Mammary epithelial cell (primary cell): ENCODE measurements at regions of chr18 and their contacts with region 1.

Region 1: DNA sequence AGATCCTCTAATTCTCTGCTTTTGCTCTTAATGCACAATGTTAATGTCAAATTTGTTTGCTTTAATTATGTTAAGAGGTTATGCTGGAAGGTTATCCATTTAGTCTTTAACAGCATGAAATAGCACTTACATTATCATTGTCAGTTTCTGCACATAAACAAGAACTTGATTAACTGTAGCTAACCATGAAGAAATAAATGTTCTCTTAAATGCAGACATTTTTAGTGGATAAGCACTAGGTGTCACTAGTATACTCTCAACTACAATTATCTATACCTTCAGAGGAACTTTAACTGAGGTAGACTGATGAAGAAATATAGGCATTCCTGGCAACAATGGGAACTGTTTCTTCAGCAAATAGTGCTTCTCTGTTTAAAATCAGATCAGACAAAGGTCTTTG is 178.8 kb upstream of the CHST9 start:
- DNase-seq: no peak
- H3K4me3 ChIP-seq: no peak overlapping the region
- H3K27ac ChIP-seq: no peak overlapping the region
- H3K4me1 ChIP-seq: no peaks in the 10 kb centered on the region
- H3K27me3 ChIP-seq: peaks cover 2% of the 10 kb centered on the region
- CTCF ChIP-seq: peak; percentile 18 to 56

Region 2: DNA sequence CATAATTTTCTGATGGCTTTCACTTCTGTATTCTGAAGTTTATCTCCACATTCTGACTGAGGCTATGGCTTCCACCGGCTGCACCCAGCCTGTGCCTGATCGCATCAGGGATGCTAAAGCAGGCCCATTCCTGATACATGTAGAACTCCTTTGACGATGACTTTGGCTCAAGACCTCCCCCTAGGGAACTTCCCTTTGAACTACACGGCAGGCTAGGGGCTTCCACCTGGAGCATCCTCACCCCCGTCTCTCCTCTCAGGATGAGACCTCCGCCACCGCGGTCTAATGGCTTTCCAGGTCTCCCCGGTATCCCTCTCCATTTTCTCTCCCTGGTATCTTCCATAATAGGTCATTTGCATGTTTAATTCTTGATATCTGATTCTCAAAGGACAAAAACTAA is 36.1 kb after region 1 on chr18:
- CTCF ChIA-PET with region 1: no interaction called
- dilution Hi-C with region 1: no loop called
- in situ Hi-C with region 1: no loop called
- intact Hi-C with region 1: loop called (anchors 1 kb)
- DNase-seq: no peak
- H3K4me3 ChIP-seq: no peak overlapping the region
- H3K27ac ChIP-seq: no peak overlapping the region
- H3K4me1 ChIP-seq: no peaks in the 10 kb centered on the region
- H3K27me3 ChIP-seq: no peaks in the 10 kb centered on the region
- CTCF ChIP-seq: peak; percentile 24 to 37

Region 3: DNA sequence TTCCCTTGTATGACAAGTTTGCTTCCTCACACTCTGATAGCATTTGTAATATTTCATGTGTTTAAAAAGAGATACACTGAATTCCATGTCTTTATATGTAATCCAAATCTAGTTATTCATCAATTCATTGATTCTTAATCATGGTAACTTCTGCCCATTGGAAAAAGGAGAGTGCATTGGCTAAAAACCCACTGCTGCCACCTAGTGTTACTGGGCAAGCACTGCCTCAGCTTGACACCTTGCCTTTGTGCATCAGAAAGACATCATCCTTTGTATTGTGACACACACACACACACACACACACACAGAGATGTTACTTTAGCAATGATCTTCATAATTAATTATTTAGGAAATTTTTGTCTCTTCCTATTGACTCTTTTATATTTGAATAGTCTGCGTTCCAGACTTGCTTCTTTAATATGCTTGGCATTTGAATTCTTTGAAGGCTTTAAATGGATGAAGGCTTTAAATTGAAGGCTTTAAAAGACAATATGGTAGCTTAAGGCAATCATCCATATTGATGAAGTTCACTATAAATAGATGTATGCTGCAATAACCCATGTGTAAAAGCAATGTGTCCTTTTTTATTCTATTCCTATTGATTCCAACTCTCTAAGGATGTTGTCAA is 235.4 kb after region 1 on chr18:
- CTCF ChIA-PET with region 1: interaction called, 6 read pairs
- dilution Hi-C with region 1: no loop called
- in situ Hi-C with region 1: loop called (anchors 5 to 10 kb)
- intact Hi-C with region 1: loop called (anchors 1 kb)
- DNase-seq: peak; percentile 41
- H3K4me3 ChIP-seq: no peak overlapping the region
- H3K27ac ChIP-seq: no peak overlapping the region
- H3K4me1 ChIP-seq: no peaks in the 10 kb centered on the region
- H3K27me3 ChIP-seq: no peaks in the 10 kb centered on the region
- CTCF ChIP-seq: peak; percentile 96 to 99

Region 4: DNA sequence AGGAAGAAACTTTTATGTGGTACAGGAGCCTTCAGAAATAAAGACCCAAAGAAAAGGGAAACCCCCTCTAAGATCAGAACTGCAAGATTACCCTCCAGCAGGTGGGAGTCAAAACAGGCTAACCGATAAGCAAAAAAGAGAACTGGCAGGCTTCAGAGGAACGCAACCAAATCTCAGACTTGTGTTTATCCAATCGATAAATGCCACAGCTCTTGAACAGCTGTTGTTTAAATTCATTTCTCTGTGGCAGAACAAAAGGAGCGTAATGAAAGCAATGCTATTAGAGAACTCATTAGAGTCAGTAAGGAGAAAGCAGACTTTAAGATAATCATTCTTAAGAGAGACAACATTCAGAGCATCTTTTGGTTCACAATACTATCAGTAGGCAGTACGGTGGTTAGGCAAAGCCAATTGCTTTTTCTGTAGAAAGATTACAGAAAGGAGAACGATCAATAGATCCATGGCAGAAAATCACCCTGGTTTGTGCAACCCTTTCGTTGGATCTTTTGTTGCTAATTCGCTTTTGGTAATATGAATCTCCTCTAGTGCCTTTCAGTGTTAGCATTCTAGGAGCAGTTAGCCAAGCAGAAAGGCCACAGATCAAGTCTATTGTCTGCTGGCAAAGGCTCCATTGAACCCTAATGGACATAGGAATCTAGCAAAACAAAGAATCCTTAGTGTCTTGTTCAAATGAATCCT is 297.6 kb after region 1 on chr18:
- CTCF ChIA-PET with region 1: no interaction called
- dilution Hi-C with region 1: no loop called
- in situ Hi-C with region 1: no loop called
- intact Hi-C with region 1: no loop called
- DNase-seq: no peak
- H3K4me3 ChIP-seq: no peak overlapping the region
- H3K27ac ChIP-seq: no peak overlapping the region
- H3K4me1 ChIP-seq: no peaks in the 10 kb centered on the region
- H3K27me3 ChIP-seq: no peaks in the 10 kb centered on the region
- CTCF ChIP-seq: no peak

Region 5: DNA sequence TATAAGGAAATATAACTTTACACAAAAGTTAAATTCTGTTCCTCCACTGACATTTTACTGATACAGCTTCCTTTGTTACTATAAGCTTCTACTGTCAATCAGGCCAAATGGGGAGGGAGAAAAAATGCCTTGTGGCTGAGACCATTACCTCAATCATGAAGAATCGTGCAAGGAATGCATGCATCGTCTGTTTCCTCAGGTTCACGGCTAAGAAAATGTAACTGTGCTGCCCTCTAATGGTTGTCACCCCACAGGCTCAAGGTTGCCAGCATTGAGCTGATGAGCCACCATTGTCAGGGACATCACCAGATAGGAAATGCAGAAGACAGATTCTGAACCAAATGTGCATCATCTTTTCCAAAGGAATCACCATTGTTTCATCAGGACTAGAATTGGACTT is 386.1 kb after region 1 on chr18:
- CTCF ChIA-PET with region 1: no interaction called
- dilution Hi-C with region 1: no loop called
- in situ Hi-C with region 1: no loop called
- intact Hi-C with region 1: loop called (anchors 10 kb)
- DNase-seq: peak; percentile 40
- H3K4me3 ChIP-seq: no peak overlapping the region
- H3K27ac ChIP-seq: no peak overlapping the region
- H3K4me1 ChIP-seq: no peaks in the 10 kb centered on the region
- H3K27me3 ChIP-seq: no peaks in the 10 kb centered on the region
- CTCF ChIP-seq: peak; percentile 71 to 74